Body of pancreas (tissue), 4 donors: ENCODE measurements at regions of chr1 and their contacts with region 1.

Region 1: GRCh38 chr1:160101037-160101716 is 2.8 kb upstream of the IGSF8 start:
- DNase-seq: peak; percentile 80 to 87 (median 86)
- ATAC-seq: peak; percentile 35
- H3K4me3 ChIP-seq: no peak overlapping the region
- H3K27ac ChIP-seq: peak overlapping the region in 3 of 4 donors; percentile 46 to 67 (median 55)
- H3K4me1 ChIP-seq: peaks cover 38% of the 10 kb centered on the region
- H3K27me3 ChIP-seq: no peaks in the 10 kb centered on the region
- CTCF ChIP-seq: peak; percentile 86 to 99 (median 89)
- POLR2A ChIP-seq: peak in 2 of 3 donors; percentile 17 to 22

Region 2: GRCh38 chr1:159501082-159501481 is 600.1 kb before region 1 on chr1:
- intact Hi-C with region 1: no loop called
- DNase-seq: no peak
- ATAC-seq: no peak
- H3K4me3 ChIP-seq: no peak overlapping the region
- H3K27ac ChIP-seq: no peak overlapping the region
- H3K4me1 ChIP-seq: no peaks in the 10 kb centered on the region
- H3K27me3 ChIP-seq: no peaks in the 10 kb centered on the region
- CTCF ChIP-seq: no peak
- POLR2A ChIP-seq: no peak

Region 3: GRCh38 chr1:160291248-160292220 is 190.4 kb after region 1 on chr1:
- intact Hi-C with region 1: loop called (anchors 5 kb)
- DNase-seq: peak; percentile 76 to 81 (median 78)
- ATAC-seq: peak; percentile 93
- H3K4me3 ChIP-seq: no peak overlapping the region
- H3K27ac ChIP-seq: no peak overlapping the region
- H3K4me1 ChIP-seq: no peaks in the 10 kb centered on the region
- H3K27me3 ChIP-seq: no peaks in the 10 kb centered on the region
- CTCF ChIP-seq: peak; percentile 65 to 86 (median 80)
- POLR2A ChIP-seq: no peak

Region 4: DNA sequence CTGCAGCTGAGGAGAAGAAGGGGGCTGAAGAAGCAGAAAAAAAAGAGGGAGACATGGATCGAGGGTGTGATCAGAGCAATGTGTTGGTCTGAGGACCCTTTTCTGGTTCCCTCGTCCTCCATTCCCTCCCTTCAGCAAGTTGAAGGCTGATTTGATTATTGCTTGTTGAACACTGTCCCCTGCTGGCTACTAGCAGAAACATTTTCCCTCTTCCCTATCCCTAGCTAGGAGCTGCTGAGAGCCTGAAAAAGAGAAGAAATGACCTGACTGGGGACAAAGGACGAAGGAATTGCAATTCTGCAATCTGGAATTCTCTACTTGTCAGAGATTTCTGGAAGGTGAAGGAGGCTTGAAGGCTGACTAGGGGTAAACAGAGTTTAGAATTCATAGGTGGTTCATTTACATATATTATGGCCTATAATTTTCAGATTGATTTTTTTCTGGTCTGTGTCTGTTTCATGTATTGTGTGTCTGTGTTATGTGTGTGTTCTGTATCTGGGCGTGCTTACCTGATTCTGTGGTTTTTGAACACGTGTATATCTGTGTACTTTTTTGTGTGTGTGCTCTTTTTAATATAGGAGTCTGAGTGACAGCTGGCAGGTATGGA is 275.5 kb after region 1 on chr1:
- intact Hi-C with region 1: loop called (anchors 10 kb)
- DNase-seq: peak; percentile 28 to 59 (median 36)
- ATAC-seq: peak; percentile 83
- H3K4me3 ChIP-seq: no peak overlapping the region
- H3K27ac ChIP-seq: peak overlapping the region in 2 of 4 donors; percentile 58 to 64
- H3K4me1 ChIP-seq: peaks cover 9% of the 10 kb centered on the region
- H3K27me3 ChIP-seq: no peaks in the 10 kb centered on the region
- CTCF ChIP-seq: peak; percentile 69 to 98 (median 93)
- POLR2A ChIP-seq: no peak

Region 5: DNA sequence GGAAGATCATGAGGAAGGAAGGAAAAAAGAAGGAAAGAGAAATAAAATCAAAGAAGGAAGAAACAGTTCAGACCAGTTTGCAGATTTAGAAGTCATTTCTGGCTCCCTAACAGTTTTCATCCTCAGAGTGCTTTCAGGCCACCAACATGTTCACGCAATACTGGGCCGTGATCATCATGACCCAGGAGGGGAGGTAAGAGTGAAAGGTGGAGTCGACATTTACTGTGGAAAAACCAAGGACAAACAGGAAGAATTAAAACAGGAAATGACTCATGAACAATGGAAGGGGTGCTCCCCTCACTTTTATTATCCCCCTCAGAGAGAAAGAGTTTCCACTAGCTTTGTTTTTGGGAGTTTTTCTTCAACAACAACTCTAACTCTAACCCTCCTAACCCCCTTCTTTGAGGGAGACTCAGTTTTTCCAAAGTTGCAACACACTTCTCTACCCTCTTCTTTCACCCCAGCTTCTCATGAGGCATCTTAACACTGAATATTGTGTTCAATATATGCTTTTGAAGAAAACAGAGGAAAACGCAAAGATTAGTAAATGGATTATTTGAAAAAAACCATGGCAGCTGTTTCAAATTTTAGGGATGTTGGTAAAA is 359.6 kb after region 1 on chr1:
- intact Hi-C with region 1: no loop called
- DNase-seq: no peak
- ATAC-seq: no peak
- H3K4me3 ChIP-seq: no peak overlapping the region
- H3K27ac ChIP-seq: no peak overlapping the region
- H3K4me1 ChIP-seq: no peaks in the 10 kb centered on the region
- H3K27me3 ChIP-seq: no peaks in the 10 kb centered on the region
- CTCF ChIP-seq: no peak
- POLR2A ChIP-seq: no peak